ENCODE measurements at regions of chr5 and their contacts with region 1.

Region 1: DNA sequence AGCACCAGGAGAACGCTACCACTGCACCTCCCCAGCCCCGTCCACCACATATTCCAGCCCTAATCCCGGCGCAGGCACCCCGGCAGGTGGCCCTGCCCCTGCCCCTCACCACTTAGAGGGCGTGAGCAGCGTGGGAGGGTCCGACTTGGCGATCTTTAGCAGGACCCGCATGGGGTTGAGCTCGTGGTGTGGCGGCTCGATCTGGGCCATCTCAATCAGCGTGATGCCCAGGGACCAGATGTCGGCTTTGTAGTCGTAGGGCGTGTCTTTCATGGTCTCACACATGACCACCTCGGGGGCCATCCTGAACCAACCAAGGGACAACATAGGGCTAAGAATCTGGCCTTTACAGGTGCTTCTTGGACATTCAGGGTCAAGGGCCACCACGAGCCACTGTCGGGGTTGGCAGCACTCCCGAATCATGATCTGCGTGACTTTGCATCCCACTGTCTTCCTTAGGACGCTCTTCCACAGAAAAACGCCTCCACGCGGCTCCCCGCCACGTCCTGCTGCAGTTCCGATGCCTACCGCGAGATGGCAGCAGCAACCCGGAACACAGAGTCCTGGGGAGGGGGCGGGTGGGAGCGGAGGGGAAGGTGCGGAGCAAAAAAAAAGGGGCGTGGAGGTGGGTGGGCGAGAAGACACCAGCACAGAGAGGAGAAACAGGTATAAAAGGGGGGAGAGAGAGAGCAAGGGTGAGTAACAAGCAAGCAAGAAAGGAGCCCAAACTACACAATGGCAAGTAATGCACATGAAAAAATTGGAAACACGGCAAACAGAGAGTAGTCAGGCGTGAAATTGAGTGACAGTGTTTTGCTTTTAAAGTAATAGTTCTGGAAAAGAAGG is 81.3 kb downstream of the STK10 start:
- DNase-seq: peak in 1 of 2 experiments; percentile 61
- H3K4me3 ChIP-seq: peak overlapping the region; percentile 29; the same call in 1 of the 2 replicates
- H3K27ac ChIP-seq: peak overlapping the region; percentile 25; the same call in 1 of the 2 replicates
- H3K4me1 ChIP-seq: peaks cover 27% of the 10 kb centered on the region
- H3K27me3 ChIP-seq: no peaks in the 10 kb centered on the region
- CTCF ChIP-seq: peak; percentile 99

Region 2: GRCh38 chr5:171913987-171914273 is 192.8 kb before region 1 on chr5:
- CTCF ChIA-PET with region 1: no interaction called
- POLR2A ChIA-PET with region 1: no interaction called
- intact Hi-C with region 1: loop called (anchors 5 kb)
- DNase-seq: no peak
- H3K4me3 ChIP-seq: no peak overlapping the region
- H3K27ac ChIP-seq: no peak overlapping the region
- H3K4me1 ChIP-seq: no peaks in the 10 kb centered on the region
- H3K27me3 ChIP-seq: no peaks in the 10 kb centered on the region
- CTCF ChIP-seq: no peak

Region 3: GRCh38 chr5:172028167-172028566 is 78.6 kb before region 1 on chr5:
- CTCF ChIA-PET with region 1: interaction called, 19 read pairs
- POLR2A ChIA-PET with region 1: no interaction called
- intact Hi-C with region 1: no loop called
- DNase-seq: no peak
- H3K4me3 ChIP-seq: no peak overlapping the region
- H3K27ac ChIP-seq: no peak overlapping the region
- H3K4me1 ChIP-seq: no peaks in the 10 kb centered on the region
- H3K27me3 ChIP-seq: no peaks in the 10 kb centered on the region
- CTCF ChIP-seq: no peak

Region 4: DNA sequence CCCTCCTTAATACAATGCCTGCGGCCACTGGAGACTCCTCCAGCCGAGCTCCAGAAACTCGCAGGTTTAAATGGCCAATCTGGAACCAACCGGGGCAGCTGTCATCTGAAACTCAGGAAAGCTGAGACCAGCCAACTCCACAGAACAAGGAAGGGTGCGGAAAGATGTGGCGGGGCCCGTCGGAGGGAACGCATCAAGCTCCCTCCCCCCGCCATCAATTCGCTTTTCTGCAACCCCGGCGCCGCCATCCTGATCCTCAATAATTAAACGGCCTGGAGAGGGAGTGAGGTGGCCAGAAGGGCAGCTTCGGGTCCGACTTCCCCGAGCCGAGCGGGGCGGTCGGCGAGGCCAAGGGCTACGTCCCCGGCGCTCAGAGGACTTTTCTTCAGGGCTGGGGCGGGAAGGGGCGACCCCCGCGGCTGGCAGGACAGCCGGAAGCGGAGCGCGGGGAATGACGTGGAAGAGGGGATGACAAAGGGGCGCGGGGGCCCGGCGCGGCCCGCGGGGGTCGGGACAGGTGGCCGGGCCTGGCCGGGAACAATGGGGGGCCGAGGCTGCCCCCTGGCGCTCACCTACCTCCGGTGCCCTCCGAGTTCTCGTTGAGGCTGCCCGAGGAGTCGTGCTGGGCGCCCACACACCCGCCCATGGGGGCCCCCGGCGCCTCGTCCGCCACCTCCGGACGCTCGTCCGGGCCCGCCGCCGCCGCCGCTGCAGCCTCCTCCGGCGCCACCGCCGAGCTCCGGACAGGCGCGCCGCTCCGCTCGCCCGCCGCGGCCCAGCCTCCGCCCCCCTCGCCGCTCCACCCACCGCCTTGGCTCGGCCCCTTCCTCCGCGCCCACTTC is 176.5 kb after region 1 on chr5 and contains the start of gene UBTD2:
- CTCF ChIA-PET with region 1: no interaction called
- POLR2A ChIA-PET with region 1: interaction called, 5 read pairs
- intact Hi-C with region 1: loop called (anchors 2 kb)
- DNase-seq: peak; percentile 59 to 91
- H3K4me3 ChIP-seq: peak within 1 kb of the TSS; percentile 98
- H3K27ac ChIP-seq: peak within 1 kb of the TSS; percentile 46
- H3K4me1 ChIP-seq: peaks cover 25% of the 10 kb centered on the region
- H3K27me3 ChIP-seq: no peaks in the 10 kb centered on the region
- CTCF ChIP-seq: peak; percentile 62
- total RNA-seq, gene UBTD2: 16.4 and 21.7 TPM in 2 replicates

Region 5: DNA sequence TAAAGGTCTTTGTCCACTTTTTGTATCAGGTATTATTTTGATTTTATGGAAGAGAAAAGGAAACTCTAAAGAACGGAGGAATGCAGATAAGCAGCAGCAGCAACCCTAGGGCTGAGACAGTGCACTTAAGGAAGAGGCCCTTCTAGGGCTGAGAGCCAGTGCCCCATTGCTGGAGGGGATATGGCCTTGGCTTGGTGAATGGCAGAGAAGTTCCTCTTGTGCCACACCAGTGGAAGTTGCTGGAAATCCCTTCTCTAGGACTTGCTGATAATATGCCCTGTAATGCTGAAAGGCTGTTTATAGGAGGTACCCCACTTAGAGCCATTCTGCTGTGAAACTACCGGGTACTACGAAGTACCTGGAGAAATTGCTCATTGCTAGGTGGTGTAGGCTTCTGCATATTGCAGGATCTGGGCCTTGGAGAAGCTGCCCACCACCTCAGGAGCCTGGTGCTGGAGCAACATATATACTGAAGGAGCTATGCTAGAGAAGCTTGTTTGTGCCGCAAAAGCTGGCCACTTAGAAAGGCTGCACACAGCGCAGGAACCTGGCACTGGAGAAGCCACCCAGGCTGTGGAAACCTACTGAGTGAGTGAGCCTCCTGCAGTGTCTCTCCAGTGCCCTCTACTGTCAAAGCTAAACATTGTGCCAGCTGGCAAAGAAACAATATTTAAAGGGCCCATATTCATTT is 186.5 kb after region 1 on chr5:
- CTCF ChIA-PET with region 1: interaction called, 5 read pairs
- POLR2A ChIA-PET with region 1: no interaction called
- intact Hi-C with region 1: loop called (anchors 1 kb)
- DNase-seq: peak; percentile 51 to 66
- H3K4me3 ChIP-seq: no peak overlapping the region
- H3K27ac ChIP-seq: no peak overlapping the region
- H3K4me1 ChIP-seq: 0 out of 2 replicates have a peak, but pooled peaks cover 4% of the 10 kb centered on the region
- H3K27me3 ChIP-seq: no peaks in the 10 kb centered on the region
- CTCF ChIP-seq: peak; percentile 89